Activated CD4-positive, alpha-beta T cell treated with anti-CD3 and anti-CD28 coated beads, Interleukin-2, amount 10 ng/mL, durations not matched to agents 7 days and 5 days (primary cell): ENCODE measurements at regions of chr19 and their contacts with region 1.

Region 1: GRCh38 chr19:4524808-4525562 is 6.7 kb upstream of the PLIN4 start:
- DNase-seq: peak; percentile 75
- H3K4me3 Mint-ChIP-seq: no peak overlapping the region
- H3K27ac Mint-ChIP-seq: no peak overlapping the region
- H3K4me1 Mint-ChIP-seq: no peaks in the 10 kb centered on the region
- H3K27me3 Mint-ChIP-seq: no peaks in the 10 kb centered on the region

Region 2: DNA sequence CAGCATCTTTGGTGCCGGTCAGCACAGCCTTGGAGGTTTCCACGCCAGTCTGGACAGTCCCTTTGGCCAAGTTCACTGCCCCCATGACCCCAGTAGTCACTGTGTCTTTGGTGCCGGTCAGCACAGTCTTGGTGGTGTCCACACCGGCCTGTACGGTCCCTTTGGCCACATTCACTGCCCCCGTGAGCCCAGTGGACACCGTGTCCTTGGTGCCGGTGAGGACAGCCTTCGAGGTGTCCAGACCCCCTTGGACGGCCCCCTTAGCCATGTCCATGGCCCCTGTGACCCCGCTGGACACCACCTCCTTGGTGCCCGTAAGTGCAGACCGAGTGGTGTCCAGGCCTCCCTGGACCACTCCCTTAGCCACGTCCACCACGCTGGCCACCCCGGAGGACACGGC is 11.7 kb before region 1 on chr19:
- CTCF ChIA-PET with region 1: interaction called, 10 read pairs
- POLR2A ChIA-PET with region 1: no interaction called
- DNase-seq: no peak
- H3K4me3 Mint-ChIP-seq: no peak overlapping the region
- H3K27ac Mint-ChIP-seq: no peak overlapping the region
- H3K4me1 Mint-ChIP-seq: no peaks in the 10 kb centered on the region
- H3K27me3 Mint-ChIP-seq: no peaks in the 10 kb centered on the region

Region 3: DNA sequence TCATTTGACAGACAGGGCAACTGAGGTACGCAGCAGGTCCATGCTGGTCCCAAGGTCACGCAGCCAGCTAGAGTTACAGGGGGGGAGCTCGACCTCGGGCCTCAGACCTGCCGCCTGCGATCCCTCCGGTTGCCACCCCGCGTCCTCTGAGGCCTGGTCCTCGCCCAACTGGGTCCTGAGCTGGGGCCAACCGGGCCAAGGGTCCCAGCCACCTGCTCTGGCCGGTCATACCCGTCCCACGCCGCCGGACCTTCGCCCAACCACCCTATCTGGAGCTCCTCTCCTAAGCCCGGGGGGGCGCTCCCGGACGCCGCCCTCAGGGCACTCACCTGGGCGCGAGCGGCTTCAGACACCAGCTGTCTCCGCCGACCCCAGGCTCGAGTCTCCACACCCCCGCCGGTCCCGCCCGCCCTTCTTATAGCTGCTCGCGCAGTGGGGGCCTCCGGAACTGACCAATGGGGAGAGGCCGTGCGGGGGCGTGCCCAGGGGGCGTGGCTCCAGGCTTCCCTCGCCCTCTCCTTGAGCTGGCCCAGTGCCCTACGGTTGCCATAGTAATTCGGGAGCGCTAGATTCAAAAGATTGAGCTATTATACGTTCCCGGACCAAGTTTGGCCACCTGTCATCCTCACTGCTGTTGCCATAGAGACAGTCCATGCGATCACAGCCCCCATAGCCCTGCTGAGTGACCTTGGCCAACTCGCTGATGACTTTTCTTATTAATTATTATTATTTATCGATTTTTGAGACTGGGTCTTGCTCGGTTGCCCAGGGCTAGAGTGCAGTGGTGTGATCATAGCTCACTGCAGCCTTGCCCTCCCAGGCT is 10.1 kb after region 1 on chr19 and contains the start of gene PLIN5:
- CTCF ChIA-PET with region 1: interaction called, 19 read pairs
- POLR2A ChIA-PET with region 1: no interaction called
- DNase-seq: peak; percentile 26
- H3K4me3 Mint-ChIP-seq: no peak within 1 kb of the TSS
- H3K27ac Mint-ChIP-seq: no peak within 1 kb of the TSS
- H3K4me1 Mint-ChIP-seq: peaks cover under 1% of the 10 kb centered on the region
- H3K27me3 Mint-ChIP-seq: peaks cover 13% of the 10 kb centered on the region
- total RNA-seq, gene PLIN5: not detected